WTC11 (cell line): ENCODE measurements at regions of chr15 and their contacts with region 1.

Region 1: GRCh38 chr15:65832549-65833364 is 36.5 kb upstream of the RAB11A start:
- DNase-seq: peak; percentile 71
- ATAC-seq: peak; percentile 90
- H3K4me3 Mint-ChIP-seq: peak overlapping the region; percentile 54
- H3K27ac Mint-ChIP-seq: peak overlapping the region; percentile 99
- H3K4me1 Mint-ChIP-seq: peaks cover 63% of the 10 kb centered on the region
- H3K27me3 Mint-ChIP-seq: no peaks in the 10 kb centered on the region
- CTCF ChIP-seq: no peak

Region 2: DNA sequence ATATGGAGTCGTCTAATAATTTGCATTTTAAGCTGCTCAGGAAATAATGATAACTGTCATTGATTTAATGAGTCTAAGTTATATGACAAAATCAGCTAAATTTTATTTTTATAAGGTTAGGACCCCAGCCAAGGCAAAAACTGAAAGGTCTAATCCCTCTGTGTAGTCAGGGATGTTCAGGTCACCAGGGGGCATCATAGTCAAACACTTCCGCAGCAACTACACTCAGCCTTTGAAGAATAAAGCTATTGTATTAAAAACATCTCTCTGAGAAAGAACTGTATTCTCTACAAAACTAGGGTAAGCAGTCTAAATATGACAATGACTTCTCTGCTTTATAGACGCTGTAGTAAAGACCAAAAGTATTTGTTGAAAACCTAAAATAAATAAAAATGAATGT is 236.8 kb before region 1 on chr15:
- CTCF ChIA-PET with region 1: interaction called, 16 read pairs
- POLR2A ChIA-PET with region 1: no interaction called
- DNase-seq: peak; percentile 27
- ATAC-seq: peak; percentile 48
- H3K4me3 Mint-ChIP-seq: no peak overlapping the region
- H3K27ac Mint-ChIP-seq: no peak overlapping the region
- H3K4me1 Mint-ChIP-seq: no peaks in the 10 kb centered on the region
- H3K27me3 Mint-ChIP-seq: no peaks in the 10 kb centered on the region
- CTCF ChIP-seq: no peak

Region 3: DNA sequence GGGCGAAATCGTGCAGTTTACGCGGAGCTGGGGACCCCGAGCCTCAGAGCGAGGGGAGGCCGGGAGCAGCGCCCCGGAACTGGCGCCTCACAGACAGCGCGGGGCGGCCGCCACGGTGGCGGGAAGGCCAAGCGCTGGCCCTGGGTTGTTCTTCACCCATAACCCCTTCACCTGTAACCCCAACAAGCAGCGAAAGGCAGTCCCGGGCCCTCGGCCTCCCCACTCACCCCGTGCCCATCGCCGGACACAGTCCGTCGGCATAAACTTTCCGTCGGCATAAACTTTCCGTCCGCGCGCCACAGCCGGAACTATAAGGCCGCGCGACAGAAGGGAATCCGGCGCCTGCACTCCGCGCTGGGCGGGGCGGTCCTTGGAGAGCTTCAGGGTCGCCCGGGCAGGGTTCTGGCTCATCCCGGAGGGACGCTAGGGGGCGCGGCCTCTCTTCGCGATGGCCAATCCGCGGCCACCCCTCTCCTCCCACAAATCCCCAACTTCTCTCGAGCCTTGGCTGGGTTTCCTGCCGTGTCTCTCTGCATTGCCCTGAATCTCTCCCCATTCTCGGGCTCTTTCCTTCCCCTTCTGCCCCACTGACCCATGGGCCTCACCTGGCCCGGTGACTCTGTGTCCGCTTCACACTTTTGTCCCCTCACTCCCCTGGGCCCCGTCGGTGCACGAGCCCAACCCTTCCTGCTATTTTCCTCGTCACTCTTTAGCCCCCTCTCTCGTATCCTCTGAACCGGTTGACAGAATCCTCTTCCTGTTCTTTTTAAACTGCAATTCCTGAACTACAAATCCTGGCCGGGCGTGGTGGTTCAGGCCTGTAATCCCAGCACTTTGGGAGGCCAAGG is 221.7 kb before region 1 on chr15 and contains the start of gene INTS14:
- CTCF ChIA-PET with region 1: interaction called, 17 read pairs
- POLR2A ChIA-PET with region 1: interaction called, 6 read pairs
- DNase-seq: peak; percentile 99
- ATAC-seq: peak; percentile 99
- H3K4me3 Mint-ChIP-seq: peak within 1 kb of the TSS; percentile 92
- H3K27ac Mint-ChIP-seq: peak within 1 kb of the TSS; percentile 99
- H3K4me1 Mint-ChIP-seq: peaks cover 21% of the 10 kb centered on the region
- H3K27me3 Mint-ChIP-seq: no peaks in the 10 kb centered on the region
- CTCF ChIP-seq: peak; percentile 67
- total RNA-seq, gene INTS14: 28.3 to 31.9 TPM (median 30.7 TPM) in 3 replicates

Region 4: GRCh38 chr15:65738649-65739048 is 94.1 kb before region 1 on chr15:
- CTCF ChIA-PET with region 1: no interaction called
- POLR2A ChIA-PET with region 1: no interaction called
- DNase-seq: no peak
- ATAC-seq: no peak
- H3K4me3 Mint-ChIP-seq: no peak overlapping the region
- H3K27ac Mint-ChIP-seq: no peak overlapping the region
- H3K4me1 Mint-ChIP-seq: peaks cover 8% of the 10 kb centered on the region
- H3K27me3 Mint-ChIP-seq: no peaks in the 10 kb centered on the region
- CTCF ChIP-seq: no peak

Region 5: DNA sequence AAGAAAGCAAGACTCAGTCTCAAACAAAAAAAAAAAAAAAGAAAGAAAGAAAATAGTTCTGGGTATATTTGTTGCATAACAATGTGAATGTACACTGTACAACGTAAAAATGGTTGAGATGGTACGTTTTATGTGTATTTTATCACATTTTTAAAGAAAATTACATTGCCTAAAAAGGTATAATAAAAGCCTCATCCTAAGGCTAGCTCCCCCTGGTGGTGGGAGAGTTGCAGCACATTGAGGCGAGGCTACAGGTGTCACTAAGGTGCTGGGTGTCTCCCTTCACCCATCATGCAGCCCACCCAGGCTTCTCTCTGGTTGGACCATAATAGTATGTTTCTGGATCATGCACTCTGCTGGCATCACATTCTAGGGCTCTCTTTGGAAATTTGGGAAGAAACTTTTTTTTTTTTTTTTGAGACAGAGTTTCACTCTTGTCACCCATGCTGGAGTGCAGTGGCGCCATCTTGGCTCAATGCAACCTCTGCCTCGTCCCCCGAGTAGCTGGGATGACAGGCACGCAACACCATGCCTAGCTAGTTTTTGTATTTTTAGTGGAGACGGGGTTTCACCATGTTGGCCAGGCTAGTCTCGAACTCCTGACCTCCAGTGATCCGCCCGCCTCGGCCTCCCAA is 24.2 kb after region 1 on chr15:
- CTCF ChIA-PET with region 1: interaction called, 32 read pairs
- POLR2A ChIA-PET with region 1: no interaction called
- DNase-seq: peak; percentile 83
- ATAC-seq: peak; percentile 76
- H3K4me3 Mint-ChIP-seq: no peak overlapping the region
- H3K27ac Mint-ChIP-seq: no peak overlapping the region
- H3K4me1 Mint-ChIP-seq: peaks cover 16% of the 10 kb centered on the region
- H3K27me3 Mint-ChIP-seq: no peaks in the 10 kb centered on the region; the same call in 1 of the 2 replicates
- CTCF ChIP-seq: peak; percentile 78

Region 6: GRCh38 chr15:65862682-65863081 is 29.9 kb after region 1 on chr15:
- CTCF ChIA-PET with region 1: interaction called, 32 read pairs
- POLR2A ChIA-PET with region 1: no interaction called
- DNase-seq: peak; percentile 77
- ATAC-seq: peak; percentile 99
- H3K4me3 Mint-ChIP-seq: no peak overlapping the region
- H3K27ac Mint-ChIP-seq: no peak overlapping the region
- H3K4me1 Mint-ChIP-seq: peaks cover 23% of the 10 kb centered on the region
- H3K27me3 Mint-ChIP-seq: no peaks in the 10 kb centered on the region
- CTCF ChIP-seq: 0 out of 2 replicates have a peak, but pooled peaks have one; percentile 16

Region 7: DNA sequence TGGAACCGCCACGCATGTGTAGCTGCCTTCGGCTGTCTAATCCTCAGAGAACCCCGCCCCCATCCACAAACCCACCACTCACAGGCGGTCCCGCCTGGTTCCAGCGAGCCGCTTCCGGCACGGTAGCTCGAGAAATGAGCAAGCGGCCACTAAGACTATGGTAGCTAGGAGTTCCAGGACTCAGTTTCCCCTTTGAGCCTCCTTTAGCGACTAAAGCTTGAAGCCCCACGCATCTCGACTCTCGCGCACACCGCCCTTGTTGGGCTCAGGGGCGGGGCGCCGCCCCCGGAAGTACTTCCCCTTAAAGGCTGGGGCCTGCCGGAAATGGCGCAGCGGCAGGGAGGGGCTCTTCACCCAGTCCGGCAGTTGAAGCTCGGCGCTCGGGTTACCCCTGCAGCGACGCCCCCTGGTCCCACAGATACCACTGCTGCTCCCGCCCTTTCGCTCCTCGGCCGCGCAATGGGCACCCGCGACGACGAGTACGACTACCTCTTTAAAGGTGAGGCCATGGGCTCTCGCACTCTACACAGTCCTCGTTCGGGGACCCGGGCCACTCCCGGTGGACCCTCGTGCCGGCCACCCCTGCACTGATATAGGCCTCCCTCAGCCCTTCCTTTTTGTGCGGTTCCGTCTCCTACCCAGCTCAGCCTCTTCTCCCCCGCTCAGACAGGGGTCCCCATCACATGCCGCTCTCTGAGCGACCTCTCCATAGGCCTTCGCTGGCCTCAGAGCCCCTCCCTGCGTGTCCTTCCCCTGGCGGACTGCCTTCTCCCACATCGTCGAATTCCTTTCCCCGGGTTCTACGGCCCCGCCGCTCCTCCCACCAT is 36.6 kb after region 1 on chr15 and contains the start of gene RAB11A:
- CTCF ChIA-PET with region 1: interaction called, 8 read pairs
- POLR2A ChIA-PET with region 1: interaction called, 15 read pairs
- DNase-seq: peak; percentile 95
- ATAC-seq: peak; percentile 91
- H3K4me3 Mint-ChIP-seq: peak within 1 kb of the TSS; percentile 99
- H3K27ac Mint-ChIP-seq: peak within 1 kb of the TSS; percentile 99
- H3K4me1 Mint-ChIP-seq: peaks cover 16% of the 10 kb centered on the region
- H3K27me3 Mint-ChIP-seq: peaks cover 3% of the 10 kb centered on the region; the same call in 1 of the 2 replicates
- CTCF ChIP-seq: no peak
- total RNA-seq, gene RAB11A: 223 to 245 TPM (median 224 TPM) in 3 replicates

Region 8: DNA sequence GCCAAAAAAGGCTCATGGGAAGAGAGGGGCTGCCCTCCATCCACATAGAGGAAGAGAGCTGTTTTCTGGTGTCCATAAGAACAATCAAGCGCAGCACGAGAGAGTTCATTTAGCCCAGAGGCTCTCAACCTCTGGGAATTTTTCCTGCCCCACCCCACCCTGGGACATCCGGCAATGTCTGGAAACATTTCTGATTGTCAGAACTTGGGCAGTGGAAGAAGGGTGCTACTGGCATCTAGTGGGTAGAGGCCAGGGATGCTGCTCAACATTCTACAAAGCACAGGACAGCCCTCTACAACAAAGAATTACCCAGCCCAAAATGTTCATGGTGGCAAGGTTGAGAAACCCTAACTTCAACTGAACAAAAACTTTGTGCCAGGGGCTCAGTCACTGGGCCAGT is 129.4 kb after region 1 on chr15:
- CTCF ChIA-PET with region 1: no interaction called
- POLR2A ChIA-PET with region 1: no interaction called
- DNase-seq: no peak
- ATAC-seq: no peak
- H3K4me3 Mint-ChIP-seq: no peak overlapping the region
- H3K27ac Mint-ChIP-seq: no peak overlapping the region
- H3K4me1 Mint-ChIP-seq: peaks cover 13% of the 10 kb centered on the region
- H3K27me3 Mint-ChIP-seq: no peaks in the 10 kb centered on the region; the same call in 1 of the 2 replicates
- CTCF ChIP-seq: no peak

Region 9: DNA sequence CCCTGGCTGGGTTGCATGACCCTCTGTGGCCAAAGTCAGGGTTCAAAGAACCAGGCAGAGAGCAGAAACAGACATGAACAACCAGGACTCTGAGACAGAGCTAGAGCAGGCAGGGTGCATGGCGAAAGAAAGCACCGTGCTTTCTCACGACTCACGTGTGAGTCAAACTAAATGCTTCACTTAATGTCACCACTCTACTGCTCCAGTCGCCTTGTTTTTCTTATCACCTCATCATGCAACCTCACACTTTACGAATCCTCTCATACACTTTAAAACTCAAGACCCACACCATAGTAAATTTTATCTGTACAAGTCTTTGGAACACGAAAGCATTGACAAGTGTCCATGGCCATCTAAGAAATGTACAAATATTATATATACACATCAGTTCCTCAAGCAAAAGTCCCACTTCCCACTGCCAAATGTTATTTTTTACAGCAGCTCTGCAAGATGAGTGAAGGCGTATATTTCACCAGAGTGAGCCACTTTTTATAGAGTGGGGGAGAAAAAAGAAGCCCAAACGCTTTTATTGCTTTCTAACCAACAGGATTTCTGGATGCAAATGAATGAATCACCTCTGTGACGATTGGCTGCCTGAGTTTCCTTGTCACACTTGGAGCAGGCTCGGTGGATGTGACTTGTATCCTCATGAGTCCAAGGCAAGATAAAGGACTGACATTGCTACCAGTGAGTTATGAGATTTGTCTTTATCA is 436.7 kb after region 1 on chr15:
- CTCF ChIA-PET with region 1: no interaction called
- POLR2A ChIA-PET with region 1: no interaction called
- DNase-seq: no peak
- ATAC-seq: peak; percentile 57; the same call in 1 of the 2 replicates
- H3K4me3 Mint-ChIP-seq: no peak overlapping the region
- H3K27ac Mint-ChIP-seq: no peak overlapping the region
- H3K4me1 Mint-ChIP-seq: peaks cover 11% of the 10 kb centered on the region
- H3K27me3 Mint-ChIP-seq: no peaks in the 10 kb centered on the region
- CTCF ChIP-seq: no peak